ENCODE measurements at regions of chr3 and their contacts with region 1.

Region 1: DNA sequence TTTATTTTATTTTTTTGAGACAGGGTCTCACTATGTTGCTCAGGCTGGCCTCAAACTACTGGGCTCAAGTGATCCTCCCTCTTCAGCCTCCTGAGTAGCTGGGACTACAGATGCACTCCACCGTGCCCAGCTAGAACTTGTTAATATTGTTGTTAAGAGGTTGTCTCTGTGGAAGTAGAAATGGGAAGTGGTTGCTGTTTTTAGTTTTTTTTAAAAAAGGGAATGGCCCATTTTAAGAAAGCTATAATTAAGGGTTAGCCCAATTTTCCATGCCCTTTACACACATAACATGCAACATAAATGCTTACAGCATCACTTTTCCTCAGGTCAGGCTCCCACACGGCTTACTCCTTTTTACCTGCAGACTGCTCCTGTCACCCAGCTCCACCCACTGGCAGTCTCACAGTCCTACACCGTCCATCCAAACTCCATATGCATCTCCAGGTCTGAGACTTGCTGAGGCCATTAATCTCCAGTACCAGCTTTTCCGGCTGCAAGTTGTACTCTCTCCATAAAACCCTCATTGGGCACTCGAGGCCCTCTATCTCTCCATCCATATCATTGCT is 19.8 kb downstream of the MORC1 start:
- DNase-seq: peak; percentile 49 to 57
- H3K4me3 ChIP-seq: no peak overlapping the region
- H3K4me3 Mint-ChIP-seq: no peak overlapping the region
- H3K27ac Mint-ChIP-seq: no peak overlapping the region
- H3K4me1 ChIP-seq: no peaks in the 10 kb centered on the region; the same call in 1 of the 2 replicates
- H3K4me1 Mint-ChIP-seq: no peaks in the 10 kb centered on the region
- H3K27me3 ChIP-seq: no peaks in the 10 kb centered on the region
- H3K27me3 Mint-ChIP-seq: no peaks in the 10 kb centered on the region
- CTCF ChIP-seq: peak; percentile 27 to 63

Region 2: DNA sequence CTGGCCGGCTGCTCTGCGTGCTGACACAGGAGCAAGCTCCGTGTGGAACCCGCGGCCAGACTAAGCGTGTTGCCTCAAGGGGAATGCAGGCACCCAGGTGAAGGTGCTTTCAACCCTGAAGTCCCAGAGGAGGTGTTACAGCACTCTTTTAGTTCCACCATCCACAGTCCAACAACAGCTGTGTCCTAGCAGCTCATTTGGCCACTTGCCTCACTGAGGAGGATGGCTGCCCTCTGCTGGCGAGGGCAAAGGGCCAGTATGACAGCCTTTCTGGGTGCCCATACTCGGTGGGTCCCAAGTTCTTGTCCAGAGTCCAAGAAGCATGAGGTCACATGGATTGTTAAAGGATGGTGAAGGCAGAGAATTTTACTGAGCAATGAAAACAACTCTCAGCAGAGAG is 126.2 kb after region 1 on chr3:
- CTCF ChIA-PET with region 1: interaction called, 3 read pairs
- POLR2A ChIA-PET with region 1: no interaction called
- intact Hi-C with region 1: loop called (anchors 10 kb)
- DNase-seq: peak; percentile 54 to 56
- H3K4me3 ChIP-seq: no peak overlapping the region
- H3K4me3 Mint-ChIP-seq: no peak overlapping the region
- H3K27ac Mint-ChIP-seq: no peak overlapping the region
- H3K4me1 ChIP-seq: no peaks in the 10 kb centered on the region
- H3K4me1 Mint-ChIP-seq: no peaks in the 10 kb centered on the region
- H3K27me3 ChIP-seq: no peaks in the 10 kb centered on the region
- H3K27me3 Mint-ChIP-seq: no peaks in the 10 kb centered on the region
- CTCF ChIP-seq: peak; percentile 38 to 55

Measured in Caco-2 (cell line).